ENCODE measurements at regions of chr11 and their contacts with region 1.

Region 1: DNA sequence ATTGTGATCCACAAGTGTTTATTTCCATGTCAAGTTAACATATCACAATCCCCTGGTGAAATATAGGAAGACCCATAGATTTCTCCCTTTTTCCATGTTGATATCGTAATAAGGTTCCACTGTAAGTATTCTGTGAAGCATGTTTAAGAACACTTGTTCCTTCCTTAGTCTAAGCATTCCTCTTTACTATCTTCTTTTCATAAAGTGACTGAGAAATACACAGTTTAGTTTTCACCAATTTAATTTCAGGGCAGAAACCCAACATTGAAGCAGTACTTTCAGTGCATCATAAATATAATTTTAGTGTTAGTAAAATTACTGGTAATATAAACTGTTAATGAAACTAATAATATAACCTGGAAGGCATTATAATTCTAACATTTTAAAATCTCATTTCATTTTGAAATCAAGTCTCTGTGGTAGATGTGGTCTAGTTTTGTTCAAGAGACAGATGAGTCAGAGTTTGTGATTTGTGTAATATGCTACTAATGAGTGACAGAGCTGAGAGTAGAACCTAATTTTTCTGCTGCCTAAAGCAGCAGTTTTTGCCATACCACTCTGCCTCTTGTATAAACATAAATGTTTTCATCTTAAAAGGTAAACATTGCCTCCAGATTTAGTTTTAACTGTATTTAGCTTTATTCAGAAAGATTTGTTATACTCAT is 79.4 kb downstream of the ATM start:
- DNase-seq: no peak
- ATAC-seq: no peak
- H3K4me3 ChIP-seq: no peak overlapping the region
- H3K4me3 Mint-ChIP-seq: no peak overlapping the region
- H3K27ac ChIP-seq: no peak overlapping the region
- H3K27ac Mint-ChIP-seq: peak overlapping the region; percentile 76
- H3K4me1 ChIP-seq: no peaks in the 10 kb centered on the region
- H3K4me1 Mint-ChIP-seq: peaks cover 37% of the 10 kb centered on the region
- H3K27me3 ChIP-seq: no peaks in the 10 kb centered on the region
- H3K27me3 Mint-ChIP-seq: no peaks in the 10 kb centered on the region
- CTCF ChIP-seq: no peak

Region 2: GRCh38 chr11:108167624-108168023 is 134.6 kb before region 1 on chr11:
- CTCF ChIA-PET with region 1: no interaction called
- POLR2A ChIA-PET with region 1: no interaction called
- intact Hi-C with region 1: loop called in 1 of 2 experiments (anchors 5 kb)
- DNase-seq: no peak
- ATAC-seq: no peak
- H3K4me3 ChIP-seq: no peak overlapping the region
- H3K4me3 Mint-ChIP-seq: no peak overlapping the region
- H3K27ac ChIP-seq: no peak overlapping the region
- H3K27ac Mint-ChIP-seq: peak overlapping the region; percentile 76
- H3K4me1 ChIP-seq: no peaks in the 10 kb centered on the region
- H3K4me1 Mint-ChIP-seq: peaks cover 35% of the 10 kb centered on the region
- H3K27me3 ChIP-seq: no peaks in the 10 kb centered on the region
- H3K27me3 Mint-ChIP-seq: no peaks in the 10 kb centered on the region
- CTCF ChIP-seq: no peak

Region 3: GRCh38 chr11:108319541-108320145 is 17.4 kb after region 1 on chr11:
- CTCF ChIA-PET with region 1: no interaction called
- POLR2A ChIA-PET with region 1: no interaction called
- intact Hi-C with region 1: no loop called
- DNase-seq: no peak
- ATAC-seq: no peak
- H3K4me3 ChIP-seq: no peak overlapping the region
- H3K4me3 Mint-ChIP-seq: no peak overlapping the region
- H3K27ac ChIP-seq: no peak overlapping the region
- H3K27ac Mint-ChIP-seq: peak overlapping the region; percentile 74
- H3K4me1 ChIP-seq: no peaks in the 10 kb centered on the region
- H3K4me1 Mint-ChIP-seq: peaks cover 9% of the 10 kb centered on the region
- H3K27me3 ChIP-seq: no peaks in the 10 kb centered on the region
- H3K27me3 Mint-ChIP-seq: no peaks in the 10 kb centered on the region
- CTCF ChIP-seq: no peak

Region 4: DNA sequence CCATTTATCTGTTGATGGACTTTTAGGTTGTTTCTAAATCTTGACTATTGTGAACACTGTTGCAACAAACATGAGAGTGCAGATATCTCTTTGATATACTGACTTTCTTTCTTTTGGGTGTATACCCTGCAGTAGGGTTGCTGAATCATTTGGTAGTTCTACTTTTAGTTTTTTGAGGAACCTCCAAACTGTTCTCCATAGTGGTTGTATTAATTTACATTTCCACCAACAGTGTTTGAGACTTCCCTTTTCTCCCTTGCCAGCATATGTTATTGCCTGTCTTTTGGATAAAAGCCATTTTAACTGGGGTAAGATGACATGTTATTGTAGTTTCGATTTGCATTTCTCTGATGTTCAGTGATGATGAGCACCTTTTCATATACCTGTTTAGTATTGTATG is 692.6 kb after region 1 on chr11:
- CTCF ChIA-PET with region 1: no interaction called
- POLR2A ChIA-PET with region 1: no interaction called
- intact Hi-C with region 1: no loop called
- DNase-seq: peak in 3 of 14 experiments; percentile 11 to 15 (median 12)
- ATAC-seq: no peak
- H3K4me3 ChIP-seq: no peak overlapping the region
- H3K4me3 Mint-ChIP-seq: no peak overlapping the region
- H3K27ac ChIP-seq: no peak overlapping the region
- H3K27ac Mint-ChIP-seq: no peak overlapping the region
- H3K4me1 ChIP-seq: no peaks in the 10 kb centered on the region
- H3K4me1 Mint-ChIP-seq: no peaks in the 10 kb centered on the region
- H3K27me3 ChIP-seq: no peaks in the 10 kb centered on the region
- H3K27me3 Mint-ChIP-seq: no peaks in the 10 kb centered on the region
- CTCF ChIP-seq: no peak